Left ventricle myocardium inferior (tissue), 1 donor: ENCODE measurements at regions of chr6 and their contacts with region 1.

Region 1: DNA sequence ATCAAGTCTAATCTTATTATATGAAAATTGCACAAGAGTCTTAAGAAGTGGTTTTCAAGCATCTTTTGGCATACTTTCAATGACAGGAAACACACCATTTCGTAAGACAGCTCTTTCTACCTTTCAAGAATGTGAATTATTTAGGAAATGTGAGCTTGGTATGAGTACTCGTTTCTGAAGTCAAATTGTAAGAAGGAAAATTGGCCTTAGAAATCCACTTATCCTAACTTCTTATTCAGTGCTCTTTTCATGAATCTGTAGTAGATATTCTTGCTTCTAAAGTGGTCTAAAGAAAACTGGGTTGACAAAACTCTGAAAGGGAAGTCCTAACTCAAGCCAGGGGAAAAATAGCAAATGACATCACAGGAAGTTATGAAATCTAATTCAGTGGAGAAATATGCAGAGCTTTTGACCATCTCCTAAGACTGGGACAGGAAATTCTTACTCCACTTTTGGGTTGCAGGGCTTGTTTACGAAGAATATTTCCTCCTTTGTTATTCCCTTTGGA is 38.5 kb upstream of the OGFRL1 start:
- DNase-seq: no peak
- H3K4me3 ChIP-seq: peak overlapping the region; percentile 0
- H3K27ac ChIP-seq: peak overlapping the region; percentile 76
- H3K4me1 ChIP-seq: peaks cover 60% of the 10 kb centered on the region
- H3K27me3 ChIP-seq: no peaks in the 10 kb centered on the region
- CTCF ChIP-seq: no peak

Region 2: DNA sequence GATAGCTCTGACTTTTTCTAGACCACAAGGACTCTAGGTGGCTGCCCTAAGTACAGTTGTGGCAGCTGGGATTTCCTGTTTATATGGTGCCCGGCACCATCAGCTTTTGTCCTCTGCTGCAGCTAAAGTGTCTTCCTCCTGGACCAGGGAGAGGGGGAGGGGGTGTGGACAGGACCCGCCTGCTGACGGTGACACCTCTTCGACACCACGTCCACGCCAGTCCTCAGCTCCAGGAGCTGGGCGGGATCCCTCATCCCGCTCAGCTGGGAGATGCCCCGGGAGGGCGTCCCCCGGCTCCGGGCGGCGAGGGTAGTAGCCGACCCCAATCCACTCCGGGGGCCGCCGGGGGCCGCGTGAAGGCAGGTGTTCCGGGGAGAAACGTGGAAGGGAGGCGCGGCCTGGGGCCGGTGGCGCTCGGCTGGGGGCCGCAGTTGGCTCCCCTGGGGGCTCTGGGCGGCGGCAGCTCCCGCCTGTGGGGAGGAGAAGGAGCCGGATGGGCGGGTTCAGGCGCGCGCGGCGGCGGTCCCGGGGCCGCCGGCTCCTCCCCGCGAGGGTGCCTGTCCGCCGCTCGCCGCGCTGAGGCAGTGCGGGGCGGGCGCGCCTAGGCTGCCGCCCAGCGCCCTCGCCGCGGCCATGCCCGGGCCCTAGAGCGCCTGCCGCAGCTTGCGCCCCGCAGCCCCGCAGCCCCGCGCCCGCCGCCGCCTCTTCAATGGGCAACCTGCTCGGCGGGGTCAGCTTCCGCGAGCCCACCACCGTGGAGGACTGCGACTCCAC is 38.3 kb after region 1 on chr6 and contains the start of gene OGFRL1:
- intact Hi-C with region 1: loop called (anchors 5 kb)
- DNase-seq: peak; percentile 84
- H3K4me3 ChIP-seq: peak within 1 kb of the TSS; percentile 83
- H3K27ac ChIP-seq: peak within 1 kb of the TSS; percentile 96
- H3K4me1 ChIP-seq: peaks cover 60% of the 10 kb centered on the region
- H3K27me3 ChIP-seq: no peaks in the 10 kb centered on the region
- CTCF ChIP-seq: peak; percentile 50
- total RNA-seq, gene OGFRL1: 7.1 TPM